Activated T-helper 2 cell treated with anti-CD3 and anti-CD28 coated beads, Interferon-gamma antibody, Interleukin-2, Interleukin-4, amounts not matched to agents 10 μg/mL and 5 μg/mL and 100 μg/mL, durations not matched to agents 14 hours and 24 hours and 36 hours (primary cell): ENCODE measurements at regions of chr12 and their contacts with region 1.

Region 1: DNA sequence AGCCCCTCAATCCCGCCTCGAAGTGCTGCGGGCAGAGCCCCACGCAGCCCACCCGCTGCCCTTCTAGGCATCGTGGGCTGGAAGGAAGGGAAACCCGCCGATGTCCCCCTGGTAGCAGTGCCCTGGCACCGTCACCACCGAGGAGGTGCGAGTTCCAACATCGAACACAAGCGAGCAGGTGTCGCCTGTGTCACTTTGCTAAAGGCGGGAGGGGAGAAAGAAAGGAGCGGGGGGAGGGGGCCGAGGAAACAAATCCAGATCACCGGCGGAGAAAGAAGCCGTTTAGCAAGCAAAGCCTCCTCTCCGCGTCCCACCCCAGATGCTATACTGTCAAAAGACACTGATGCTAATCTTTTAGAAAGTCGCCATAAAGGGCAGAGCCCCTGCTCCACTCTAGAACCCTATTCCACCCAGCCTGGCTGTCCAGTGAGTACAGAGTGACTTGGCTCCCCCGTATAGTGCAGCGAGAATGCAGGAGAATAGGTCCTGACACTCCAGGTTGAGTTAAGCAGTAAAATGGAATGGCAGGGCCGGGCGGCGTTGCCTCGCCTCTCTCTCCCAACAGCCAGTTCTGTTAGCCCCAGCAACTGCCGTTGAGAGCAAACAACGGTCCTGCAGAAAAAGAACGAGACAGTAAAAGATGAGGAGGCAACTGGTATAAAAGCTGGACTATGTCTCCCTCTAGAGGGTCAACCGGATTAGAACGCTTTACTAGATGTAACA is 67.9 kb upstream of the USP15 start:
- DNase-seq: peak; percentile 40
- H3K4me3 Mint-ChIP-seq: peak overlapping the region; percentile 75
- H3K27ac Mint-ChIP-seq: no peak overlapping the region
- H3K4me1 Mint-ChIP-seq: peaks cover 19% of the 10 kb centered on the region
- H3K27me3 Mint-ChIP-seq: peaks cover 60% of the 10 kb centered on the region

Region 2: DNA sequence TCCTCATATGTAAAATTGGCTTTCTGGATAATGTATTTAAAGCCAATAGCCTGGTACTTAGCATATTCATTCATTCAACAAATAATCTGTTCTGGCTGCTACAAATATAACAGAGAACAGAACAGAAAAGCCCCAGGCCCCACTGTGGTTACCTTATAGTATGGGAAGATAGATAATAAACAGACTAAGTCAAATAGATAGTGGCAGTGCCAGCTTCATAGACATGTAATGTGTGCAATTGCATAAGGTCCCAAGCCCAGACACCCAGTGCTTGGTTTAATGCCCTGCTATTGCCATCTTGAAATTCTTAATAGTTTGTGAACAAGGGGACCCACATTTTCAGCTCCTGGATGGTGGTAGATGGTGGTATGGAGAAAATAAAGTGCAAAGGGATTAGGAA is 252.4 kb before region 1 on chr12:
- intact Hi-C with region 1: no loop called
- DNase-seq: no peak
- H3K4me3 Mint-ChIP-seq: no peak overlapping the region
- H3K27ac Mint-ChIP-seq: no peak overlapping the region
- H3K4me1 Mint-ChIP-seq: no peaks in the 10 kb centered on the region
- H3K27me3 Mint-ChIP-seq: no peaks in the 10 kb centered on the region

Region 3: DNA sequence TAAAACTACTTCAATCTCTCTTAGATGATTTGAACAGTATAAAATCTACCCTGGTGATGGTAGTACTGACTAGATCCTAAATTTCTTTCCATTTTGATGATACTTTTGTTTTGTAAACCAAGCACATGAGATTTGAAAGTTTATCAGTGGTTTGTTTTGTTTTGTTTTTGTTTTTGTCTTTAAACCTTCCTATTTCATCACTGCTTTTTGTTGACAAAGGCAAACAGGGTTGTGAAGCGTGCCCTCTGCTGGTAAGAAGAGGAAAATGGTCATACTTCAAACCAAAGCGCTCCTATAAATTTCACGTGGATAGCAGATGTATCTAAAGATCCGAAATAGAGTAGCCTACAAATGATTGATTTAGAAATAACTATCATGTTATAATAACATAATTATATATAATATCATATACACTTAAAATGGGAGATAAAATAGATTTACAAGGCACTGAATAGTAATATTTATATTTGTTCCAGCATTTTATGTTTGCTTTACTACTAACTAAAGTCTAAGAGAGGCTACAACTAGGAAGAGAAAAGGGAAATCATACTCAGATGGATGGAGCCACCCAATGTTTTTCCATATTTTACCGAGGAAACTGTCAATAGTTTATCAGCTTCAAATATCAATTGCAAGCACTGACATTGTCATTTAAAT is 186.1 kb before region 1 on chr12:
- intact Hi-C with region 1: loop called (anchors 2 kb)
- DNase-seq: no peak
- H3K4me3 Mint-ChIP-seq: no peak overlapping the region
- H3K27ac Mint-ChIP-seq: no peak overlapping the region
- H3K4me1 Mint-ChIP-seq: no peaks in the 10 kb centered on the region
- H3K27me3 Mint-ChIP-seq: peaks cover 2% of the 10 kb centered on the region

Region 4: GRCh38 chr12:62123721-62124203 is 68.6 kb before region 1 on chr12:
- intact Hi-C with region 1: loop called (anchors 5 kb)
- DNase-seq: no peak
- H3K4me3 Mint-ChIP-seq: no peak overlapping the region
- H3K27ac Mint-ChIP-seq: no peak overlapping the region
- H3K4me1 Mint-ChIP-seq: no peaks in the 10 kb centered on the region
- H3K27me3 Mint-ChIP-seq: peaks cover 5% of the 10 kb centered on the region

Region 5: DNA sequence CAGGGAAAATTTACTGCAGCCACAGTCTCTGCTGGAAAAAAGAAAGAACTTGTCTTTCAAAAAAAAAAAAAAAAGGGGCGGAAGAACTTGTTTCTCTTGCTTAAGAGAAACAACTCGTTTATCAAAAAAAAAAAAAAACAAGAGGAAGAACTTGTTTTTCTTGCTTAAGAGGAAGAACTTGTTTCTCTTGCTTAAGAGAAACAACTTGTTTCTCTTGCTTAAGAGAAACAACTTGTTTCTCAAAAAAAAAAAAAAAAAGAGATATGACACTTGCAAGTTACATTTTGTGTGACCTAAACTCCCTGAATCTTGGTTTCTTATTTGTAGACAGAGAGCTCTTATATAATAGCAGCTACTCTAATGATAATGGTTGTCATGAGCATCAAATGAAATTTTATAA is 23.2 kb after region 1 on chr12:
- intact Hi-C with region 1: no loop called
- DNase-seq: no peak
- H3K4me3 Mint-ChIP-seq: no peak overlapping the region
- H3K27ac Mint-ChIP-seq: no peak overlapping the region
- H3K4me1 Mint-ChIP-seq: peaks cover 11% of the 10 kb centered on the region
- H3K27me3 Mint-ChIP-seq: peaks cover 15% of the 10 kb centered on the region

Region 6: DNA sequence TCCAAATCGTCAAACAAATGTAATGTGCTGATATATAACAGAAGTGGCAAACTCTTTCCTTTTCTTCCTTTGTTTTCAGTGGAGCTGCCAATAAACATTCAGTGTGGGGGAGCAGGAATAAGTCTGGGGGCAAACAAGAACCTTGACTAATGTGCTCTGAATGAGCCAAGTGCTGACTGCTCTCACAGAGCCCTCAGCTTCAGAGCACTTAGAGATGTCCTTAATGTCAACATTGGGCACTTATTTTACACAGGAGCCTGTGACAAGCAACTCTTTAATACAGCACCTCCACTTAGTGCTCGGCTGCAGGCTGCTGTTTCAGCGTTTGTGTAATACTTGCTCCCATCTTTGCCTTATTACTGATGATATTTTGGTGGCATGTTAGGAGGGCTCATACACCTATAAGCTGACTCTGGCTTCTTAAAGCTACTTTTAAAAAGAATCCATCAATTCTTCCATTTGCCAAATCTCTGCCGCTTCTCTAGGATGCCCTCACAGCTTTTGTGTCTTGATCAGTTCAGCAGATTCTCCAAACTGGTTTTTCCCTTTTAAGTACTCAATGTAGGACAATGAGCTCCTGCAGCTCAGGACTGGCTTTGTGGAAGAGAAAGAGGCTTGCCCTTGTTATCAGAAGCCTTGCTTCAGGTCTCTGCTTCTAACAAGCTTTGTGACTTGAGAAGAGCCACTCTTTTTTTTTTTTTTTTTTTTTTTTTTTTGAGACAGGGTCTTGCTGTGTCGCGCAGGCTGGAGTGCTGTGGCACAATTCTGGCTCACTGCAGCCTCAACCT is 480.9 kb after region 1 on chr12:
- intact Hi-C with region 1: no loop called
- DNase-seq: no peak
- H3K4me3 Mint-ChIP-seq: no peak overlapping the region
- H3K27ac Mint-ChIP-seq: no peak overlapping the region
- H3K4me1 Mint-ChIP-seq: no peaks in the 10 kb centered on the region
- H3K27me3 Mint-ChIP-seq: no peaks in the 10 kb centered on the region